Caco-2 (cell line): ENCODE measurements at regions of chr7 and their contacts with region 1.

Region 1: DNA sequence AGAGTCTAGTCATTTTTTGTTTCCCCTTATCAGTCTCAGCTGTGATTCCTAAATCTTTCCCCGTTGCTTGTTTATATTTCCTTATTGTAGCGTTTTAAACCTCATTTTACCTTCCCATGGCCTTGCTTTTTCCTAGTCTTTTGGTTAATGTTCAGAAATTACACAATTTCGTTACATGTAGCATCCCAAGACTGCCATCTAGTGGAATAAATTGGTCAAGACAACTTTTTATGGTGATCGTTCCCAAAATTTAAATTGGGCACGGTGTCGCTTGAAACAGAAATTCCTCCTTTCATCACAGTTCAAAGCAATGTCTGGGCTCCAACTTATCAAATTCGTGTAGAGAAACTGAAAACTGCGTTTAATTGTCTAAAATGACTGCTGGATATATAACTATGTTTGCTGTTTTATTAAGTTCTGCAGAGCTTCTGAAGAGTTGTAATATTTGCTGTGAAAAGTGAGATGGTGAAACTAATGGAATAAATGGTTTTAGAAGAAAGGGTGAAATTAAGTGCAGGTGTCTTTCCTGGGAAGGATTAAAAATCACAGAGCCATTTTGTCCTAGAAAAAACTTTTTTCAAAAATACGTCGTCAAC is 370.2 kb downstream of the PHF14 start:
- DNase-seq: peak in 1 of 2 experiments; percentile 50
- H3K4me3 ChIP-seq: no peak overlapping the region
- H3K4me3 Mint-ChIP-seq: no peak overlapping the region
- H3K27ac Mint-ChIP-seq: no peak overlapping the region
- H3K4me1 ChIP-seq: no peaks in the 10 kb centered on the region
- H3K4me1 Mint-ChIP-seq: peaks cover 7% of the 10 kb centered on the region
- H3K27me3 ChIP-seq: no peaks in the 10 kb centered on the region; the same call in 1 of the 2 replicates
- H3K27me3 Mint-ChIP-seq: no peaks in the 10 kb centered on the region
- CTCF ChIP-seq: peak; percentile 64 to 68

Region 2: DNA sequence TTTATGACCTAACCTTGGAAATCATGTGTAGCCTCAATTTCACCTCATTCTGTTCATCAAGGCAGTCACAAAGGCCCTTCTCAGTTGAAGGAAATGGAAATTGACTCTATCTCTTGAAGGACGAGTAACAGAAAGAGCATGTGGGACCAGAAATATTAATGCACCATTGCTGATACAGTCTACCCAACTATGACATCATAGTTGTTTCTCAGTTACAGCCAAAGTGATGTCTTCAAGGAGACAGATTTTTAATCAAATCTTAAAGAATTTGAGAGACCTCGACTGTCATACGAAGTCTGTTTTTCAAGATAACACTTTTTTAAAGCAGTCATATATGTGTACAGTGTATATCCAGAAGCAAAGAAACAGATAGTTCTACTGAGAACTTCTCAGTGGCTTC is 705.9 kb before region 1 on chr7:
- CTCF ChIA-PET with region 1: no interaction called
- POLR2A ChIA-PET with region 1: no interaction called
- intact Hi-C with region 1: loop called (anchors 1 kb)
- DNase-seq: no peak
- H3K4me3 ChIP-seq: no peak overlapping the region
- H3K4me3 Mint-ChIP-seq: no peak overlapping the region
- H3K27ac Mint-ChIP-seq: no peak overlapping the region
- H3K4me1 ChIP-seq: no peaks in the 10 kb centered on the region
- H3K4me1 Mint-ChIP-seq: no peaks in the 10 kb centered on the region
- H3K27me3 ChIP-seq: no peaks in the 10 kb centered on the region
- H3K27me3 Mint-ChIP-seq: no peaks in the 10 kb centered on the region
- CTCF ChIP-seq: no peak

Region 3: DNA sequence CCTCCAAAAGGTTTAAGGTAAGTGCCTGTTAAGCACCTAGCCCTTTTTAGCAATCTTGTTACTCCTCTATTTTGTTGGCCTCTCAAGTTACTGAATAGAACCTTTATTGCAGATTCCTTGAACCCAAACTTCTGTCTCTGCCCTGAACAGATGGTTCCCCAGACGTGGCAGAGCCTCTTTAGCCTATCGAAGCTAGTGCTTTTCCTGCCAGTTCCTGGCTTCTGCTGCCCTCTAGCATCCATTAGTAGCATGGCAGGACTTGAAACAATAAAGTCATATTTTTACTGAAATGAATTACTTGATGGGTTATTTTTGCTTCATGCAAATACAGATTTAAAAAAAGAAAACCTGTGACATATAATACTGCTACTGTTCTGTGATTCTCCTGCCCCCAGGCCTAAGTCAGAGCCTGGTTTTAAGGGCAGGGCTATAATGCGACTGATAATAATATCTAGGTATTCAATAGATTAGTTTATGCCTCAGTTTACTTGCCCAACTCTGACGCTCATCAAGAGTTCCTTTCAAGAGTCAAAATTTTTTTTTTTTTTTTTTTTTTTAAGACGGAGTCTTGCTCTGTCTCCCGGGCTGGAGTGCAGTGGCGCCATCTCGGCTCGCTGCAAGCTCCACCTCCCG is 454.5 kb before region 1 on chr7:
- CTCF ChIA-PET with region 1: no interaction called
- POLR2A ChIA-PET with region 1: no interaction called
- intact Hi-C with region 1: loop called (anchors 1 kb)
- DNase-seq: peak in 1 of 2 experiments; percentile 53
- H3K4me3 ChIP-seq: no peak overlapping the region
- H3K4me3 Mint-ChIP-seq: no peak overlapping the region
- H3K27ac Mint-ChIP-seq: no peak overlapping the region
- H3K4me1 ChIP-seq: no peaks in the 10 kb centered on the region
- H3K4me1 Mint-ChIP-seq: peaks cover 9% of the 10 kb centered on the region
- H3K27me3 ChIP-seq: no peaks in the 10 kb centered on the region
- H3K27me3 Mint-ChIP-seq: peaks cover 10% of the 10 kb centered on the region
- CTCF ChIP-seq: peak; percentile 64 to 86

Region 4: GRCh38 chr7:11054033-11054432 is 289.9 kb before region 1 on chr7:
- CTCF ChIA-PET with region 1: no interaction called
- POLR2A ChIA-PET with region 1: no interaction called
- intact Hi-C with region 1: loop called (anchors 10 kb)
- DNase-seq: no peak
- H3K4me3 ChIP-seq: no peak overlapping the region
- H3K4me3 Mint-ChIP-seq: no peak overlapping the region
- H3K27ac Mint-ChIP-seq: no peak overlapping the region
- H3K4me1 ChIP-seq: peaks cover 9% of the 10 kb centered on the region; the same call in 1 of the 2 replicates
- H3K4me1 Mint-ChIP-seq: no peaks in the 10 kb centered on the region
- H3K27me3 ChIP-seq: no peaks in the 10 kb centered on the region
- H3K27me3 Mint-ChIP-seq: no peaks in the 10 kb centered on the region
- CTCF ChIP-seq: no peak

Region 5: GRCh38 chr7:11212080-11212711 is 131.7 kb before region 1 on chr7:
- CTCF ChIA-PET with region 1: no interaction called
- POLR2A ChIA-PET with region 1: no interaction called
- intact Hi-C with region 1: loop called (anchors 1 kb)
- DNase-seq: peak; percentile 56 to 59
- H3K4me3 ChIP-seq: no peak overlapping the region
- H3K4me3 Mint-ChIP-seq: no peak overlapping the region
- H3K27ac Mint-ChIP-seq: no peak overlapping the region
- H3K4me1 ChIP-seq: 0 out of 2 replicates have a peak, but pooled peaks cover 7% of the 10 kb centered on the region
- H3K4me1 Mint-ChIP-seq: no peaks in the 10 kb centered on the region
- H3K27me3 ChIP-seq: no peaks in the 10 kb centered on the region
- H3K27me3 Mint-ChIP-seq: no peaks in the 10 kb centered on the region
- CTCF ChIP-seq: peak; percentile 71 to 82

Region 6: GRCh38 chr7:11228515-11228914 is 115.4 kb before region 1 on chr7:
- CTCF ChIA-PET with region 1: no interaction called
- POLR2A ChIA-PET with region 1: no interaction called
- intact Hi-C with region 1: no loop called
- DNase-seq: no peak
- H3K4me3 ChIP-seq: no peak overlapping the region
- H3K4me3 Mint-ChIP-seq: no peak overlapping the region
- H3K27ac Mint-ChIP-seq: no peak overlapping the region
- H3K4me1 ChIP-seq: no peaks in the 10 kb centered on the region
- H3K4me1 Mint-ChIP-seq: no peaks in the 10 kb centered on the region
- H3K27me3 ChIP-seq: 0 out of 2 replicates have a peak, but pooled peaks cover 1% of the 10 kb centered on the region
- H3K27me3 Mint-ChIP-seq: peaks cover 14% of the 10 kb centered on the region
- CTCF ChIP-seq: no peak

Region 7: DNA sequence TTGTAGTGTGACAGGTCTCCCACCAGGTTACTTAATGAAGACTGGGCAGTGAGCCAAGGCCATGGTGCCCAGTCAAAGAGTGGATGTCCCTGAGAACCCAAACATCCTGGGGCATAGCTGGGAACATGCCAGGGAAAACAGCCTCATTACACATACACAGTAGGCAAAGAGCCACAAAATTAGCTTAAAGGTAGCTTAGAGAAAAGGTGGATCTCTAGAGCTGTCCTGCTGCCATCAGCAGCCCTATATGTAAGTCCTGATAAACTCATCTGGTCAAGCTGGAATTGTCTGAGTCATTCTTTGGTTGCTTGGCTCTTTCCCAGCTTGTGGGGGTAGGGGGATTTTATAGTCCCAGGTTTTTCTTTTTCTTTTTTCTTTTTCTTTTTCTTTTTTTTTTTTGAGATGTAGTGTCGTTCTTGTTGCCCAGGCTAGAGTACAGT is 82.4 kb before region 1 on chr7:
- CTCF ChIA-PET with region 1: no interaction called
- POLR2A ChIA-PET with region 1: no interaction called
- intact Hi-C with region 1: no loop called
- DNase-seq: no peak
- H3K4me3 ChIP-seq: no peak overlapping the region
- H3K4me3 Mint-ChIP-seq: no peak overlapping the region
- H3K27ac Mint-ChIP-seq: no peak overlapping the region
- H3K4me1 ChIP-seq: no peaks in the 10 kb centered on the region
- H3K4me1 Mint-ChIP-seq: no peaks in the 10 kb centered on the region
- H3K27me3 ChIP-seq: no peaks in the 10 kb centered on the region
- H3K27me3 Mint-ChIP-seq: peaks cover 9% of the 10 kb centered on the region
- CTCF ChIP-seq: no peak